Mammary epithelial cell (primary cell): ENCODE measurements at regions of chr22 and their contacts with region 1.

Region 1: GRCh38 chr22:31749636-31750364 is at the start of gene PRR14L:
- DNase-seq: peak; percentile 95
- H3K4me3 ChIP-seq: peak within 1 kb of the TSS; percentile 70 to 84 (median 72)
- H3K27ac ChIP-seq: peak within 1 kb of the TSS; percentile 73
- H3K4me1 ChIP-seq: peaks cover 23% of the 10 kb centered on the region
- H3K27me3 ChIP-seq: no peaks in the 10 kb centered on the region
- CTCF ChIP-seq: peak in 1 of 2 donors; percentile 3
- total RNA-seq, gene PRR14L: 28.7 to 39.3 TPM

Region 2: DNA sequence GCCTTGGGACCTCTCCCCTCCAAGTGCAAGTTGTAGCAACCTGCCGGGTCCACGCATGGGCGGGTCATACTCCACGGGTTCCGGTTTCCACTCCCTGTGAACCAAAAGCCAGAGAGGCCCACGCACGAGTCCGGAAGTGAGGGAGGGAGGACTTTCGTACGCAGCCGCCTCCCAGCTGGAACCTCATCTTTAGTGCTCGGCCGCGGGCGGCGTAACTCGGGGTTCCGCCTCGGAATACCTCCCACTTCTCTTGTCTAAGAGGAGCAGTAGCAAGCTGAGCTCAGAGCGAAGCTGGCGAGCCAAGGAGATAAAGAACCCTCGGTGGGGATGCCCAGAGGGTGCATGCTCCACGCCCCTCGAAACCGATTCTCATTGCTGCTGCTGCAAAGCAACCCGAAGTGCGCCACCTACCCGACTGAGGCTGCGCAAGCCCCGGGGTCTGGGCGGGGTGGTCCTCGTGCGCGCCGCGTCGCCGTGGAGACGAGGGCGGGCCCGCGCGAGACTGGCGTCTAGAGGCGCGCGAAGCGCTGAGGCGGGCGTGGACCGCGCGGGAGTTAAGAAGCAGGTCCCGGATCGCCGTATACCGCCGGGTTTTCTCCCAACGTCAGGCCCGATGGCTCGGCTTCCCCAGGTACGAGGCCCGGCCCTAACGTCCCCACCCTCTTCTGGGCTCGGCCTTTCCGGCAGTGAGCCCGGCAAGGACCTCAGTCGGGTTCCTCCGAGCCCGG is 253.6 kb before region 1 on chr22 and contains the start of gene SFI1:
- CTCF ChIA-PET with region 1: no interaction called
- dilution Hi-C with region 1: no loop called
- in situ Hi-C with region 1: no loop called
- intact Hi-C with region 1: loop called (anchors 2 kb)
- DNase-seq: peak; percentile 89
- H3K4me3 ChIP-seq: peak within 1 kb of the TSS; percentile 58 to 83 (median 71)
- H3K27ac ChIP-seq: peak within 1 kb of the TSS; percentile 83
- H3K4me1 ChIP-seq: peaks cover 13% of the 10 kb centered on the region
- H3K27me3 ChIP-seq: no peaks in the 10 kb centered on the region
- CTCF ChIP-seq: no peak
- total RNA-seq, gene SFI1: 20.8 to 41.7 TPM

Region 3: GRCh38 chr22:31680861-31681341 is 68.9 kb before region 1 on chr22:
- CTCF ChIA-PET with region 1: no interaction called
- dilution Hi-C with region 1: no loop called
- in situ Hi-C with region 1: no loop called
- intact Hi-C with region 1: loop called (anchors 5 kb)
- DNase-seq: peak; percentile 60
- H3K4me3 ChIP-seq: no peak overlapping the region
- H3K27ac ChIP-seq: peak overlapping the region; percentile 44
- H3K4me1 ChIP-seq: peaks cover 47% of the 10 kb centered on the region
- H3K27me3 ChIP-seq: no peaks in the 10 kb centered on the region
- CTCF ChIP-seq: no peak

Region 4: GRCh38 chr22:31734512-31734911 is 15.3 kb before region 1 on chr22:
- CTCF ChIA-PET with region 1: no interaction called
- dilution Hi-C with region 1: no loop called
- in situ Hi-C with region 1: no loop called
- intact Hi-C with region 1: loop called (anchors 2 kb)
- DNase-seq: peak; percentile 80
- H3K4me3 ChIP-seq: no peak overlapping the region
- H3K27ac ChIP-seq: peak overlapping the region; percentile 37
- H3K4me1 ChIP-seq: peaks cover 11% of the 10 kb centered on the region
- H3K27me3 ChIP-seq: no peaks in the 10 kb centered on the region
- CTCF ChIP-seq: no peak

Region 5: DNA sequence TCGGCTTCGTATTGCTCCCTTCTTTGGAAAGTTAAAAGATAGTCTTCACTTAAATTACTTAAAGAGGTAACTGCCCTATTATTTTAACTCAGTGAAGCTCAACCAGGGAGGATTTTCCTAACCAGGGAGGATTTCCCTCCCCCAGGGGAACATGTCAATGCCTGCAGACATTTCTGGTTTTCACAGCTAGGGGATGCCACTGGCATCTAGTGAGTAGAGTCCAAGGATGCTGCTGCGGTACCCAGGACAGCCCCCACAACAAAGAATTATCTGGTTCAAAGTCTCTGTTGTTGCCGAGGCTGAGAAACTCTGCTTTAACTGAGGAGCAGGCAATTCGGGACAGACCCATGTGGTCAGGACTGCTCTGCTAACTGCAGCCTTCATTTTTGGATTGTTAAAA is 86.2 kb after region 1 on chr22:
- CTCF ChIA-PET with region 1: no interaction called
- dilution Hi-C with region 1: no loop called
- in situ Hi-C with region 1: no loop called
- intact Hi-C with region 1: loop called (anchors 10 kb)
- DNase-seq: no peak
- H3K4me3 ChIP-seq: no peak overlapping the region
- H3K27ac ChIP-seq: no peak overlapping the region
- H3K4me1 ChIP-seq: peaks cover 26% of the 10 kb centered on the region
- H3K27me3 ChIP-seq: no peaks in the 10 kb centered on the region
- CTCF ChIP-seq: peak in 1 of 2 donors; percentile 14